Activated naive CD4-positive, alpha-beta T cell treated with anti-CD3 and anti-CD28 coated beads for 36 hours (primary cell): ENCODE measurements at regions of chr1 and their contacts with region 1.

Region 1: DNA sequence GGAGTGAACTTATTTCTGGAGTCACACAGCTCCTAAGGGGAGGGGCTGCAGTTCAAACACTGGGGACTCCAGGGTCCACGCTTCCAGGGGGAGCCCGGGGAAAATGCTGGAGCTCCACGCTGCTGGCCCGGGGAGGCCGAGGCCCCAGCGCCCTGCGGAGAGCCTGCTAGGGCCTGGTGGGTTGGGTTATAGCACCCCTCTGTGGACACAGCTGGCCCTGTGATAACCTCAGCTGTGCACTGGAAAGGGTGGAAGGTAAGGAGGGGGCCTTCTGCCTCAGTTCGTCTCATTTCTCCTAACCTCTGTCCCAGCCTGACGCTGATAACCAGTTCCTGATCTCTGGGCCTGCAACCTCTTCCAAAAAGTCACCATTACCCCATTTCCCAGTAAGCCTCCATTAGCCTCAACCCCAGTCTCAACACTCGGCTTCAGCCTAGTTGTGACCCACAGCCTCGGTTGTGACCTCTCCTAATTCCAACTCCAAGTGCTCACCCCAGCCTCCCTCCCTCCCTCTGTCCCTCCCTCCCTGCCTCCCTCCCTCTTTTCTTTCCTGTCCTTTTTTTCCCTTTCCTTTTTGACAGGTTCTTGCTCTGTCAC is 7.1 kb downstream of the NBL1 start:
- DNase-seq: peak; percentile 74
- H3K4me3 Mint-ChIP-seq: no peak overlapping the region
- H3K27ac Mint-ChIP-seq: no peak overlapping the region
- H3K4me1 Mint-ChIP-seq: peaks cover 33% of the 10 kb centered on the region
- H3K27me3 Mint-ChIP-seq: no peaks in the 10 kb centered on the region

Region 2: GRCh38 chr1:19240673-19241538 is 410.3 kb before region 1 on chr1:
- CTCF ChIA-PET with region 1: interaction called, 4 read pairs
- intact Hi-C with region 1: loop called (anchors 1 kb)
- DNase-seq: peak; percentile 85
- H3K4me3 Mint-ChIP-seq: no peak overlapping the region
- H3K27ac Mint-ChIP-seq: peak overlapping the region; percentile 61
- H3K4me1 Mint-ChIP-seq: no peaks in the 10 kb centered on the region
- H3K27me3 Mint-ChIP-seq: no peaks in the 10 kb centered on the region

Region 3: GRCh38 chr1:19341201-19342072 is 309.8 kb before region 1 on chr1:
- CTCF ChIA-PET with region 1: interaction called, 14 read pairs
- intact Hi-C with region 1: loop called (anchors 1 kb)
- DNase-seq: peak; percentile 86
- H3K4me3 Mint-ChIP-seq: no peak overlapping the region
- H3K27ac Mint-ChIP-seq: no peak overlapping the region
- H3K4me1 Mint-ChIP-seq: peaks cover 10% of the 10 kb centered on the region
- H3K27me3 Mint-ChIP-seq: no peaks in the 10 kb centered on the region

Region 4: GRCh38 chr1:19439464-19440171 is 211.6 kb before region 1 on chr1:
- CTCF ChIA-PET with region 1: interaction called, 3 read pairs
- intact Hi-C with region 1: loop called (anchors 2 kb)
- DNase-seq: peak; percentile 67
- H3K4me3 Mint-ChIP-seq: no peak overlapping the region
- H3K27ac Mint-ChIP-seq: peak overlapping the region; percentile 21
- H3K4me1 Mint-ChIP-seq: peaks cover 86% of the 10 kb centered on the region
- H3K27me3 Mint-ChIP-seq: no peaks in the 10 kb centered on the region

Region 5: DNA sequence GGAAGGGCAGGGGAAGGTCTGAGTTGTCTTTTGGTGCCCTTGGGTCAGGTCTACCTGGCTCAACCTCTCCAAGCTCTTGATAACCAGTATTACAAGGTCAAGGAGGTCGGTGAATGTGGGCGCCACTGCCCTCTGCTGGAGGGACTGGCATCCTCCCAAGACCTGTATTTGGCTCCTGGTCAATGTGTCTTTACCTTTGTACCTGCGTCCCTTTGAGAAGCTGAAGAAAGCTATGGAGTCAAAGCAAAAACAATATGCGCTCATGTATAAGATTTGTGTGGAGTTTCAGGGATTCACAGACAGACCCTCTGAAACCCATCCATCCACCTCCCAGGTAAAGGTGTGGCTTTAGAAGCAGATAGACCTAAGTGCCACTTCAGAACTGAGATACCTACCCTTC is 68.9 kb before region 1 on chr1:
- CTCF ChIA-PET with region 1: interaction called, 5 read pairs
- intact Hi-C with region 1: loop called (anchors 5 kb)
- DNase-seq: peak; percentile 89
- H3K4me3 Mint-ChIP-seq: no peak overlapping the region
- H3K27ac Mint-ChIP-seq: no peak overlapping the region
- H3K4me1 Mint-ChIP-seq: peaks cover 11% of the 10 kb centered on the region
- H3K27me3 Mint-ChIP-seq: no peaks in the 10 kb centered on the region

Region 6: DNA sequence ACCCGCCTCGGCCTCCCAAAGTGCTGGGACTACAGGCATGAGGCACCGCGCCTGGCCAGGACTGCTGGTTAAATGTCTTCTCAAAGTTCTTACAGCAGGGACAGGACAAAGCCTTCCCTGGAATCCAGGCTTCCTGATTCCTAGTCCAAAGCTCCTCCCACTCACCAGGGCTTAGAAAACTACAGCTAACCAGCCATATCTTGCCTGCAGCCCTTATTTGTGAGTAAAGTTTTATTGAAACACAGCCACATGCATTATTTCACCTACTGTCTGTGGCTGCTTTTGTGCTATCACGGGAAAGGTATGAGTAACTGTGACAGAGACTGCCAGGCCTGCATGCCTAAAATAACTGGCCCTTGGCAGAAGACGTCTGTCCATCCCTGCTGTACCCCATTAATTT is 124.1 kb after region 1 on chr1:
- CTCF ChIA-PET with region 1: no interaction called
- intact Hi-C with region 1: no loop called
- DNase-seq: no peak
- H3K4me3 Mint-ChIP-seq: no peak overlapping the region
- H3K27ac Mint-ChIP-seq: no peak overlapping the region
- H3K4me1 Mint-ChIP-seq: no peaks in the 10 kb centered on the region
- H3K27me3 Mint-ChIP-seq: no peaks in the 10 kb centered on the region

Region 7: DNA sequence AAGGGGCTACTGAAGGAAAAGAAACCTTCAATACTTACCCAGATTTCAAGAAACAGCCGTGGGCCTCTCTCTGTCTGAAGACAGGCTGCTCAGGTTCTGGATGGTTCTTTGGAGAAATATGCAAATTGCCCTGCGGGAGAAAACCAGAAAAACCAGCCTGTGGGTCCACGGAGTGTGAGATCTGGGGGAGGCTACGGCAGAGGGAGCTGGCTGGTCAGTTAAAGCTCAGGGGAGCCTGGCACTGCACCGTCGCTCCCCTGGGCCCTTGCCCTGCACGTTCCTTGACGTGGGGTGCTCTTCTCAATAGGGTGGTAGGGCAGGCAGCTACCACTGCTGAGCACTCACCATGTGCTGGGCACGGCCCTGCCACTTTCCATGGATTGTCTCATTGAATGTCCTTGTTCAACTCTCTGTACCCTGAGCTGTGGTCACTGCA is 135.8 kb after region 1 on chr1:
- CTCF ChIA-PET with region 1: no interaction called
- intact Hi-C with region 1: no loop called
- DNase-seq: no peak
- H3K4me3 Mint-ChIP-seq: no peak overlapping the region
- H3K27ac Mint-ChIP-seq: no peak overlapping the region
- H3K4me1 Mint-ChIP-seq: peaks cover 10% of the 10 kb centered on the region
- H3K27me3 Mint-ChIP-seq: no peaks in the 10 kb centered on the region